ENCODE measurements at regions of chr19 and their contacts with region 1.

Region 1: DNA sequence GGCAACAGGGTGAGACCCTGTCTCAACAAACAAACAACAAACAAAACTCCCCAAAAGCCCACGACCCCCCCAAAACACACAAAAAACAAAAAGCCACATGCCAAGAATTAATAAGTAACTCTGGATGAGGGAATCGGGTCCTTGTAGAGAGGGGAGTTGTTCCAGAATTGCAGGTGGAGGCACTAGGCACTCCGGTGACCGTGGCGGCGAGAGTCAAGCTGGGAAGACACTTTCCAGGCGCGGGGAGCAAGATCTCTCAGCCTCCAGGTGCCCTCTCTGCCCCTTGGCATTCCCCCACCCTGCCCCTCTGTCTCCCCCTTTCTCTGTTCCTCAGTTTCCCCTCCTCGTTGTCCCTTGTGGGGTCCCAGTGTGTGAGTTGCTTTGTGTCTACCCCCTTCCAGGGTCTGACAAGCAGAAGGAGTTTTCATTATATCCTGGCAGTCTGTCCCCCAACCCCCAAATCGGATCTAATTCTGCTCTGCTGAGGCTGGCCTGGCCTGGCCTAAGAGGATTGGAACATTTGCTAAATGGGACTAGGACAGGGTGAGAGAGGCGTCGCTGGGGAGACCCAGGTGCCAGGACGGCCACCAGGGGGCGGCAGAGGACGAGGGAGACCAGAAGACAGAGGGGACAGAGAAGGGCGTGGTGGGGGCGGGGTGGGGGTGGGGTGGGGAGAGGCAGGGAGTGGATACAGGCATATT is 8.3 kb upstream of the CRX start:
- DNase-seq: peak; percentile 87
- ATAC-seq: peak; percentile 56

Region 2: GRCh38 chr19:47863514-47863936 is 50.1 kb after region 1 on chr19:
- intact Hi-C with region 1: loop called (anchors 5 kb)
- DNase-seq: peak; percentile 90
- ATAC-seq: peak; percentile 93

Region 3: DNA sequence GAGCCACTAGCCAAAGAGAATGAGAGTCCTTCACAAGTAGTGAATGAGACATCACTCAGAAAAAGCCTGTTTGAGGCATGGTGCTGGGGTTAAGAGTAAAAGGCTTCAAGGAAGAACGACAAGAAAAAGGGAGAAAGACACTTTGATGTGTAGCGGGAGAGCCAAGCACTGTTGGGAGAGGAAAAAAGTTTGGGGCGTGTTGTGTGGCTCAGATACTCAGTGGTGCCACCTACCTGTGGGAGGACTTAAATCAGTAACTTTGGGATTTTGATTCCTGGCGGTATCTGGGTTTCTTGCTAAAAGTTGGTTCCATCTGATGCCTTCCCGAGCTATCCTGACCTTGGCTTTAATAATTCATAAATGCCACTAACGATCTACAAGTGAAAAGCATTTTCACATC is 193.3 kb after region 1 on chr19:
- intact Hi-C with region 1: no loop called
- DNase-seq: no peak
- ATAC-seq: no peak

Measured in Right ventricle myocardium inferior (tissue), 1 donor.